Left cardiac atrium (tissue), 4 donors: ENCODE measurements at regions of chr4 and their contacts with region 1.

Region 1: DNA sequence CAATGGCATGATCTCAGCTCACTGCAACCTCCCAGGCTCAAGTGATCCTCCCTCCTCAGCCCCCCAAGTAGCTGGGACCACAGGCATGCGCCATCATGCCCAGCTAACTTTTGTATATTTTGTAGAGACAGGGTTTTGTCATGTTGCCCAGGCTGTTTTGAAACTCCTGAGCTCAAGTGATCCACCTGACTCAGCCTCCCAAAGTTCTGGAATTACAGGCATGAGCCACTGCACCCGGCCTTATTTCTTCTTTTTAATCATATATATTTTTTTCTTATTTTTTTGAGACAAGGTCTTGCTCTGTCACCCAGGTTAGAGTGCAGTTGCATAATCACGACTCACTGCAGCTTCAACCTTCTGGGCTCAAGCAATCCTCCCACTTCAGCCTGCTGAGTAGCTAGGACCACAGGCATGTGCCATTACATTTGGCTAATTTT is 184.0 kb downstream of the TSPAN5 start:
- DNase-seq: no peak
- ATAC-seq: no peak

Region 2: GRCh38 chr4:97605932-97606331 is 868.5 kb before region 1 on chr4:
- intact Hi-C with region 1: no loop called
- DNase-seq: no peak
- ATAC-seq: no peak

Region 3: DNA sequence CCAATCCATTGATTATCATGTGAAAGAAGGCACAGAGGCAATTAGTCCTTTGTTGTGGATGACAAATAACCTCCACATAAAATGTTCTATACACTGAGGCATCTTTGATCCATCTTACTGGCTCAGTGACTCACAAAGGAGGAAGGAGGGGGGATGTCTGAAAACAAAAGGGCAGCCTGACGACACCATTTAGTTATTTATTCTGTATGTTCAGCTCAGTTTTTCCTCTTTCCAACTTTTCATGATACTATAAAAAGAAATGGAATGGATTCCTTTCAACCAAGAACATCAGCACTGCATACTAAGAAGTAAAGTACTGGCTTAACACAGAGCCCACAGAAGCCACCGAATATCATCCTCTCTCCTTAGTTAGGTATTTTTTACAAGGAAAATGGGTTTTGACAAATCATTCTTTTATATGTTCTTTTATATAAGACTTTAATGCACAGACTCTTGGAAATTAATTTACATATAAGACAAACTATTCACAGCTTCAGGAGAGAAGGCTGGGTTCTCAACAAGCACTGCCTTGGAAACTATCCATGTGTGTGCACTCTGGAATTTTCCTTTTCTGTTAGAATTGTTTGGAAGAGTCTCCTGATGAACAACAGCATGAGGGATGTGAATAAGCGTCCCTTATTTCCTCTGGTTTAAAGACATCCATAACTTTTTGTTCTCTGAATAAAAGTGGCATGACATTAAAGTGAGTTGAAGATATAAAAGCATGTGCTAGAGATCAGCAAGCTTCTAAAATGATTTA is 48.4 kb after region 1 on chr4:
- intact Hi-C with region 1: no loop called
- DNase-seq: no peak
- ATAC-seq: no peak

Region 4: GRCh38 chr4:98612318-98613250 is 138.2 kb after region 1 on chr4:
- intact Hi-C with region 1: no loop called
- DNase-seq: no peak
- ATAC-seq: no peak

Region 5: DNA sequence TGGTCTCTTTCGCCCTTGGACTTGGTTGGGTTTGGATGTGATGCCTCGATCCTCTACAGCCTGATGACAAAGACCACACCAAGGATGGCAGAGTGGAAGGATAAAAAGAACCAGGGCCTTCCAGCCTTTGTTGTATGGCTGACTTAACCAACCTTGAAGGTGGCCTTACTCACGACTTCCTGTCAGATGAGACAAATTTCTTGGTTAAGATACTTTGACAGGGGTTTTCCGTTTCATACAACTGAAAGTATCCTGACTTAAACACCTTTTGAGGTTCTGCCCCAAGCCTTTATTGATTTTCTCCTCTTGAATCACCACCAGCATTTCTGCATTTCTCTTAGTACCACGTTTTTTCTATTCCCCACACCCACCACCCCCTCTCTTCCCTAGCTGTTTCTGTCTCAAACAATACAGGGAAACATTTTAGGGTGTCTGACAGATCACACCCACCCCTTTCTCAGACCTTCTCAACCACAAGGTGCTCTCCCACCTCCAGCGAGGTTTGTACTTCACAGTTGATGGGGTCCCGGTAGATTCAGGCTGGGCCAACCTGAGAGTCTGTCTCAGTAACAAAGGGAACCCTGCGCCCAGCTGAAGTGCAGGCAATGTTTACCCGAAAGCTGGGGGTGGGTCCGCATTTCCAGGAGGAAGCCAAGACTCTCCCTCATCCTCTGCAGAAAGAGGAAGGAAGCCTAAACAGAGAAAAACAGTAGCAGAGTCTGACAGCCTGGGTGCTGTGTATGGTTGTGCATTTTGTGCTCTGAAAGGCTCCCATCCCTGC is 189.0 kb after region 1 on chr4:
- intact Hi-C with region 1: loop called in 1 of 2 experiments (anchors 10 kb)
- DNase-seq: no peak
- ATAC-seq: no peak

Region 6: DNA sequence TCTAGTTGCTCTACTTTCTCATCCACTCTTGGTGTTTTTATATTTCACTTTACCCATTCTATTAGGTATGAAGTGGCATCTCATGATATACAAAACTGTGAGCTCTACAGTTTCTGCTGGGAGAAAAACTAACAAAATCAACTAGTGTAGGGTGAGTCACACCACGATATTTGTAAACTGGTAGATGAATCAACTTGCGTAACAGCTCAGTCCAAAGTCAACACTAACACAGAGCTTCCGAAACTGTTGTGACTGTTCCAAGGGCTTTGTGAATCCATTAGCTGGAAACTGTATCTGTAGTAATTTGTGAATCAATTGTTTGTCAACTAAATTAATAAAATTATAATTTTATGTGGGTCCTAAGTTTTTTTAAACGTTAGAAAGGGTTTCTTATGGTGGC is 303.8 kb after region 1 on chr4:
- intact Hi-C with region 1: no loop called
- DNase-seq: no peak
- ATAC-seq: peak in 1 of 2 donors; percentile 64